B cell (primary cell): ENCODE measurements at regions of chr12 and their contacts with region 1.

Region 1: DNA sequence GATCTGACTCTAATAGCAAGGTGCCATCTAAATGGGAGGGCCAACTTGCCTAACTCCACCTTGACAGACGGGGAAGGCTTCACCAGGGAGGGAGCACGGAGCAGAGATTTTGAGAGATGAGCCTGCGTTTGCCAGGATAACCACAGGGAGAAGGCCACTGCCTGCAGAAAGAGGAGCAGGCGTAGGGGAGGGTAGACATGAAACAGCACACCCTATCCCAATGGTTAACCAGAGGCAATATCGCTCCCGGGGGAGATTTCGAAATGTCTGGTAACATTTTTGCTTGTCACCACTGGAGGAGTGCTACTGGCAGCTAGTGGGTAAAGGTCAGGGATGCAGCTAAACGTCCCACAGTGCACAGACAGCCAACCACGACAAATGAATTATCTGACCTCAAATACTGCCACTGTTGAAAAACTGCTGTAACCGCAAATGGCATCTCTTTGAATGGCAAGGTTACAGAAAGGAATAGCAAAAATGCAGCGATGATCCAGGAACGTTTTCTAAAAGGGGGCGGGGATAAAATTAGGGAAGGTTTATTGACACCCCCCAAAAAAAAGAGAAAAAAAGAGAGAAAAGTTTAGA is 126.0 kb upstream of the ATF7IP start:
- DNase-seq: peak; percentile 80
- ATAC-seq: peak; percentile 79
- H3K4me3 ChIP-seq: peak overlapping the region; percentile 26 to 53 (median 39)
- H3K4me3 Mint-ChIP-seq: peak overlapping the region; percentile 88
- H3K27ac ChIP-seq: peak overlapping the region; percentile 96 to 99
- H3K27ac Mint-ChIP-seq: peak overlapping the region; percentile 100
- H3K4me1 ChIP-seq: peaks cover 34 to 35% of the 10 kb centered on the region in 2 donors
- H3K4me1 Mint-ChIP-seq: peaks cover 35% of the 10 kb centered on the region
- H3K27me3 ChIP-seq: no peaks in the 10 kb centered on the region
- H3K27me3 Mint-ChIP-seq: no peaks in the 10 kb centered on the region
- CTCF ChIP-seq: no peak

Region 2: DNA sequence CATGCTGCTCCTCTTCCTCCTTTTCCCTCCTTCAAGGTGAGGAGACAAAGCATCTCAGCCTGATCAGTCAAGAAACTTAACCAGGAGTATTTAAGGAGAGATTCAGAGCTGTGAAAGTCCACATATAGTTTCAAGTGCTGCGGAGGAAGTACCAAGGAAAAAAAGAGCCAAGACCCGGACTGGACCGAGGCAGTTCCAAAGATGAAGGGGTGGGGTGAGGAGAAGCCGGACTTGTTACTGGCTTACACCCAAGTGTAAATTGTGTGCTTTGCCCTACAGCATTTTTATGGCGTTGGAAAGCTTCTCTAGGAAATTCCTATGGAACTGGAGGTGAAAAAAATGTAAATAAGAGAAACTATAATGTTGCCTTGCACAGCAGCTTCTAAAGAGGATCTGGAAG is 521.2 kb before region 1 on chr12:
- CTCF ChIA-PET with region 1: no interaction called
- POLR2A ChIA-PET with region 1: no interaction called
- intact Hi-C with region 1: no loop called
- DNase-seq: no peak
- ATAC-seq: no peak
- H3K4me3 ChIP-seq: no peak overlapping the region
- H3K4me3 Mint-ChIP-seq: no peak overlapping the region
- H3K27ac ChIP-seq: no peak overlapping the region
- H3K27ac Mint-ChIP-seq: no peak overlapping the region
- H3K4me1 ChIP-seq: no peaks in the 10 kb centered on the region
- H3K4me1 Mint-ChIP-seq: no peaks in the 10 kb centered on the region
- H3K27me3 ChIP-seq: no peaks in the 10 kb centered on the region
- H3K27me3 Mint-ChIP-seq: peaks cover 29% of the 10 kb centered on the region
- CTCF ChIP-seq: no peak

Region 3: GRCh38 chr12:14207905-14208551 is 31.4 kb before region 1 on chr12:
- CTCF ChIA-PET with region 1: interaction called, 10 read pairs
- POLR2A ChIA-PET with region 1: no interaction called
- intact Hi-C with region 1: no loop called
- DNase-seq: no peak
- ATAC-seq: no peak
- H3K4me3 ChIP-seq: no peak overlapping the region
- H3K4me3 Mint-ChIP-seq: no peak overlapping the region
- H3K27ac ChIP-seq: no peak overlapping the region
- H3K27ac Mint-ChIP-seq: no peak overlapping the region
- H3K4me1 ChIP-seq: no peaks in the 10 kb centered on the region
- H3K4me1 Mint-ChIP-seq: no peaks in the 10 kb centered on the region
- H3K27me3 ChIP-seq: no peaks in the 10 kb centered on the region
- H3K27me3 Mint-ChIP-seq: no peaks in the 10 kb centered on the region
- CTCF ChIP-seq: no peak

Region 4: GRCh38 chr12:14284184-14284722 is 44.8 kb after region 1 on chr12:
- CTCF ChIA-PET with region 1: interaction called, 12 read pairs
- POLR2A ChIA-PET with region 1: no interaction called
- intact Hi-C with region 1: loop called (anchors 1 kb)
- DNase-seq: peak; percentile 51
- ATAC-seq: peak; percentile 40
- H3K4me3 ChIP-seq: peak overlapping the region in 1 of 5 experiments; percentile 25
- H3K4me3 Mint-ChIP-seq: peak overlapping the region; percentile 79
- H3K27ac ChIP-seq: peak overlapping the region; percentile 92 to 95
- H3K27ac Mint-ChIP-seq: peak overlapping the region; percentile 97
- H3K4me1 ChIP-seq: peaks cover 39 to 64% of the 10 kb centered on the region in 2 donors
- H3K4me1 Mint-ChIP-seq: peaks cover 48% of the 10 kb centered on the region
- H3K27me3 ChIP-seq: no peaks in the 10 kb centered on the region
- H3K27me3 Mint-ChIP-seq: no peaks in the 10 kb centered on the region
- CTCF ChIP-seq: no peak

Region 5: DNA sequence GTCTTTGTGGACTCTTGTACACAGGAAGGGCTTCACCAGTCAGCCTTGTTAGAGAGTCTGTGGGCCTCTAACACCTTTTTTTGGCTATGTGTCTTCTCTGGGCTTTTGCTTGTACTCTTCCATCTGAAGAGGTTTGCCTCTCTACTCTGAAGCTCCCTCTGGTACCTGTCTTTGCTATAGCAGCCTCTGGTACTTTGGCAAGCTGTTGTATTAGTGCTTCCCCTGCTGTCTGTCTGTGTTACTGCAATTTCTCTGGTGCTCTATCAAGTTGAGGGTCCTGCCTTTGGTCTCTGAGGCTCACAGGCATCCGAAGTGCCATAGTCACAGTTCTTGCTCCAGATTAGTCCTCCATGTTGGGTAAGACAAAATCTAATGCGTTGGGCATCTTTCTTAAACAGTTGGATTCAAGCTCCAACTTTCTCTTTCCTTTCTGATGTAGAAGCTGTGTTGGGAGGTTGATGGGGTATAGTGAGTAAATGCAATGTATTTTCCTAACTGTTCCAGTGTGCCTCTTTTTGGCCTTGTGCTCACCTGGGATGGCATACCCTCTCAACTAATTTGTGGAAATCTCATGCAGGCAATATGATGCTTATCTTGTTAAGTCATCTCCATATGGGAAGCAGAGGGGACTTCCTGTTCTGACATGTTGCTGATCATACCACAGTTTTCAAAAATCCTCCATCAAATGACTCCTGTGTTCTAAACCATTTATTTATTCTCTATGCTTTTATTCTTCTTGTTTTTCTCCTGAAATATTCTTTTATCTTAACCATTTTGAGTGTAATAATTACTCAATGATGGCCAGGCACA is 214.9 kb after region 1 on chr12:
- CTCF ChIA-PET with region 1: interaction called, 89 read pairs
- POLR2A ChIA-PET with region 1: no interaction called
- intact Hi-C with region 1: loop called (anchors 1 kb)
- DNase-seq: peak; percentile 57
- ATAC-seq: peak; percentile 87
- H3K4me3 ChIP-seq: no peak overlapping the region
- H3K4me3 Mint-ChIP-seq: no peak overlapping the region
- H3K27ac ChIP-seq: peak overlapping the region in 1 of 2 donors; percentile 7
- H3K27ac Mint-ChIP-seq: peak overlapping the region; percentile 72
- H3K4me1 ChIP-seq: peaks cover 0 to 8% of the 10 kb centered on the region in 2 donors
- H3K4me1 Mint-ChIP-seq: peaks cover 40% of the 10 kb centered on the region
- H3K27me3 ChIP-seq: no peaks in the 10 kb centered on the region
- H3K27me3 Mint-ChIP-seq: no peaks in the 10 kb centered on the region
- CTCF ChIP-seq: peak; percentile 52

Region 6: DNA sequence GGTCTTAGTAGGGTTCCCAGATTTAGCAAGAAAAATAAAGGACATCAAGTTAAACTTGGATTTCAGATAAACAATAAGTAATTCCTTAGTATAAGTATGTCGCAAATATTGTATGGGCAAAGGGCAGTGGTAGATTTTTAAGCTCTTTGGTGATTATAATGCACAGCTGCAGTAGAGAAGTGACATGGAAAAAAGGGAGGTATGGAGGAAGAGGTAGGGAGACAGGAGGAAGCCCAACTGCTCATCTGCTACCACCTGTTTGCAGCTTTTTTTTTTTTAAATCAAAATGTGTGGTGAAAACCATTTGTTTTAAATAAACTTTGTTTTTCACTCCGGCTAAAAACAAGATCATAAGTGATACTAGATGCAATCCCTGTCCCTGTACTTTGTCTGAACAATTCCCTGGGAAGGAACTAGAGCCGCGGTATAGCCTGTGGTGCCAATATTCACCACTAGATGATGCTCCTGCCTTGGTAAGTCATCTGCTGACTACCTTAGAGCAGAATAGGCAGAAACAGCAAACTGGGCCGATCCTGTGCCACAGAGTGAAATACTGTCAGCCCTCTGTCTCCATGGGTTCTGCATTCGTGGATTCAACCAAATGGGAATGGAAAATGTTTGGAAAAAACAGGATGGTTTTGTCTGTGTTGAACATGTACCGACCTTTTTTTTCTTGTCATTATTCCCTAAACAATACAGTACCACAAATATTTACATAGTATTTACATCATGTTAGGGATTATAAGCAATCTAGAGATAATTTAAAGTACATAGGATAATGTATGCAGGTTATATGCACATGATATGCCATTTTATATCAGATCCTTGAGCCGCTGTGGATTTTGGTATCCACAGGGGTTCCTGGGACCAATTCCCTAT is 390.6 kb after region 1 on chr12:
- CTCF ChIA-PET with region 1: interaction called, 23 read pairs
- POLR2A ChIA-PET with region 1: no interaction called
- intact Hi-C with region 1: loop called (anchors 1 kb)
- DNase-seq: peak; percentile 77
- ATAC-seq: peak; percentile 100
- H3K4me3 ChIP-seq: no peak overlapping the region
- H3K4me3 Mint-ChIP-seq: no peak overlapping the region
- H3K27ac ChIP-seq: no peak overlapping the region
- H3K27ac Mint-ChIP-seq: no peak overlapping the region
- H3K4me1 ChIP-seq: no peaks in the 10 kb centered on the region
- H3K4me1 Mint-ChIP-seq: no peaks in the 10 kb centered on the region
- H3K27me3 ChIP-seq: no peaks in the 10 kb centered on the region
- H3K27me3 Mint-ChIP-seq: no peaks in the 10 kb centered on the region
- CTCF ChIP-seq: peak; percentile 98

Region 7: DNA sequence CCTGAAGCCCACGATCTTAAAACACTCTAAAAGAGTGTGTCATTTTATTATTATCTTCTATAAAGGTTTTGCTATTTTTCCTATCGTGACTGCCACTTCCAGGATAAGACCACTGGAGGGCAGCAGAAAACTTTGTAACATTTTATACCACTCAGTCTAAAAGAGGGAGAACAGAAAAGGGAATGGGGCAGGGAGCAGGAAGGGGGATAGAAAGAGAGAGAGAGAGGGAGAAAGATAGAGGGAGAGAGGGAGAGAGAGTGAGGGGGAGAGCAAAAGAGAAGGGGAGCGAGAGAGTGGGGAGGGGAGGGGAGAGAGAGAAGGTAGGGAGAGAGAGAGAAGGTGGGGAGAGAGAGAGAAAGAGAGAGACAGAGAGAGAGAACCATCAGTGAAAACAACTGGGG is 605.9 kb after region 1 on chr12:
- CTCF ChIA-PET with region 1: interaction called, 3 read pairs
- POLR2A ChIA-PET with region 1: no interaction called
- intact Hi-C with region 1: loop called (anchors 1 kb)
- DNase-seq: peak; percentile 72
- ATAC-seq: peak; percentile 81
- H3K4me3 ChIP-seq: no peak overlapping the region
- H3K4me3 Mint-ChIP-seq: no peak overlapping the region
- H3K27ac ChIP-seq: no peak overlapping the region
- H3K27ac Mint-ChIP-seq: no peak overlapping the region
- H3K4me1 ChIP-seq: peaks cover 0 to 4% of the 10 kb centered on the region in 2 donors
- H3K4me1 Mint-ChIP-seq: peaks cover 9% of the 10 kb centered on the region
- H3K27me3 ChIP-seq: no peaks in the 10 kb centered on the region
- H3K27me3 Mint-ChIP-seq: no peaks in the 10 kb centered on the region
- CTCF ChIP-seq: peak; percentile 77